ENCODE measurements at regions of chr4 and their contacts with region 1.

Region 1: GRCh38 chr4:129362674-129363274 is 266.8 kb downstream of the C4orf33 start:
- DNase-seq: peak; percentile 13
- ATAC-seq: peak; percentile 83
- H3K4me3 ChIP-seq: no peak overlapping the region
- H3K27ac ChIP-seq: no peak overlapping the region
- H3K4me1 ChIP-seq: no peaks in the 10 kb centered on the region
- H3K27me3 ChIP-seq: no peaks in the 10 kb centered on the region; a peak in 1 of 4 replicates
- CTCF ChIP-seq: peak; percentile 69 to 83 (median 81)
- EP300 ChIP-seq: no peak
- POLR2A ChIP-seq: no peak
- RAD21 ChIP-seq: peak; percentile 85

Region 2: GRCh38 chr4:129344058-129344457 is 18.7 kb before region 1 on chr4:
- CTCF ChIA-PET with region 1: interaction called, 14 read pairs
- POLR2A ChIA-PET with region 1: no interaction called
- RAD21 ChIA-PET with region 1: interaction called, 5 read pairs
- SMC1A ChIA-PET with region 1: interaction called, 4 read pairs
- in situ Hi-C with region 1: no loop called
- intact Hi-C with region 1: no loop called
- DNase-seq: no peak
- ATAC-seq: peak; percentile 83
- H3K4me3 ChIP-seq: no peak overlapping the region
- H3K27ac ChIP-seq: no peak overlapping the region
- H3K4me1 ChIP-seq: no peaks in the 10 kb centered on the region
- H3K27me3 ChIP-seq: no peaks in the 10 kb centered on the region
- CTCF ChIP-seq: peak; percentile 33 to 57 (median 48); a peak in 5 of 6 replicates
- EP300 ChIP-seq: no peak
- POLR2A ChIP-seq: no peak
- RAD21 ChIP-seq: peak; percentile 37; the same call in 1 of the 2 replicates

Region 3: GRCh38 chr4:129350834-129351721 is 11.7 kb before region 1 on chr4:
- CTCF ChIA-PET with region 1: interaction called, 15 read pairs
- POLR2A ChIA-PET with region 1: no interaction called
- RAD21 ChIA-PET with region 1: interaction called, 5 read pairs
- SMC1A ChIA-PET with region 1: interaction called, 9 read pairs
- in situ Hi-C with region 1: no loop called
- intact Hi-C with region 1: no loop called
- DNase-seq: no peak
- ATAC-seq: no peak
- H3K4me3 ChIP-seq: no peak overlapping the region
- H3K27ac ChIP-seq: no peak overlapping the region
- H3K4me1 ChIP-seq: no peaks in the 10 kb centered on the region
- H3K27me3 ChIP-seq: no peaks in the 10 kb centered on the region
- CTCF ChIP-seq: no peak
- EP300 ChIP-seq: no peak
- POLR2A ChIP-seq: no peak
- RAD21 ChIP-seq: no peak

Region 4: DNA sequence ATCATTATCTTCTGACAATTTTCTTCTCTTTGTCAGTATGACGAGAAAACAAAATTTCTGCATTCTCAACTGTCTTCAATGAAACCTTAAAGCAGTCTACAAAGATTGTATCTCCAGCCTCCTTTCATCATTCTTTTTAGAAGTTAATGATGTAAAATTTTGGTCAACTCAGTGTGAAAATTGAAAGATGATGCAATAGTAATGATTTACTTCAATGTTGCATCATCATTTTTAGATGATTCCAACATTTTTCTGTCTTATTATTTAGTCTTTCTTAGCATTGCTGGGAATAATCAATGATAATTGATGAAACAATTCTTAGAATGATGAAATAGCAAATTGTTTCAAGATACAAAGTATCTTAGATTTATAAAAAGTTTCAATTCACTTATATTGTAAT is 105.8 kb after region 1 on chr4:
- CTCF ChIA-PET with region 1: no interaction called
- POLR2A ChIA-PET with region 1: no interaction called
- RAD21 ChIA-PET with region 1: no interaction called
- SMC1A ChIA-PET with region 1: no interaction called
- in situ Hi-C with region 1: no loop called
- intact Hi-C with region 1: no loop called
- DNase-seq: no peak
- ATAC-seq: no peak
- H3K4me3 ChIP-seq: no peak overlapping the region
- H3K27ac ChIP-seq: no peak overlapping the region
- H3K4me1 ChIP-seq: no peaks in the 10 kb centered on the region
- H3K27me3 ChIP-seq: no peaks in the 10 kb centered on the region
- CTCF ChIP-seq: no peak
- EP300 ChIP-seq: no peak
- POLR2A ChIP-seq: no peak
- RAD21 ChIP-seq: no peak